ENCODE measurements at regions of chr1 and their contacts with region 1.

Region 1: DNA sequence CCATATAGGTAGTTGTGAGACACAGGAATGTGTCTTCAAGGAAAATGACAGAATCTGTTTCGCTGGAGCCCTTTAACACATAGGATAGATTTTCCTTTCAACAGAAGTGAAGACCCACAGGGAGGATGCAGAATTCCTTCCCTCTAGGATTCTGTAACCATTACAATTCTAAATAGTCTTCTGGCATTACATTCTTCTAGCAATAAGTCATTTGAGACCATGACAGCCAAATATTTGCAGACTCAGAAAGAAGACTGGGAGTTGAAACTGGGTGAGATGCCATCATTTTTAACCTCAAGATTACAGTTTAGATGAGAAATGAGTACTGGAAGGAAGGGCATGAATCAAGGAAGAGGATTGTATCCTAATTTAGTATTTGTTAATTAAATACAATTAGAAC is 61.6 kb downstream of the ZBTB18 start:
- DNase-seq: no peak
- H3K4me3 ChIP-seq: no peak overlapping the region
- H3K27ac ChIP-seq: no peak overlapping the region
- H3K4me1 ChIP-seq: no peaks in the 10 kb centered on the region
- H3K27me3 ChIP-seq: peaks cover under 1% of the 10 kb centered on the region
- CTCF ChIP-seq: no peak
- EP300 ChIP-seq: no peak
- POLR2A ChIP-seq: no peak

Region 2: DNA sequence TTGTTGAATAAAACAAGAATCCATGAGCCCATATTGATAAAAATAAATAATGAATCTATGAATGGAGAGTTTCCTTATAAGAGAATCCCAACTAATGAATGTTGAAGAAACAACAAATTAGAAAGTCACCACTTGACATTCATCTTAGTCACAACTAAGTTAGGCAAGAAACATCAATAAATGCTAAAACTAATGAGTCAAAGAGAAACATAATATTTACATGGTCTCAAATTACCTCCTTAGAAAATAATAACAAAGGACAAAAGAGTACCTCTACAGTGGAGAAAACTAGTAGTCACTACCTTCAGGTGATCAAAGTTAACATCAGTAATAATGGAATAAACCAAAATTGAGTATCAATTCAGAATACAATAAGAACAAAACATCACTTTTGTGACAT is 356.1 kb before region 1 on chr1:
- in situ Hi-C with region 1: no loop called
- intact Hi-C with region 1: loop called (anchors 5 kb)
- DNase-seq: no peak
- H3K4me3 ChIP-seq: no peak overlapping the region
- H3K27ac ChIP-seq: no peak overlapping the region
- H3K4me1 ChIP-seq: no peaks in the 10 kb centered on the region
- H3K27me3 ChIP-seq: no peaks in the 10 kb centered on the region
- CTCF ChIP-seq: no peak
- EP300 ChIP-seq: no peak
- POLR2A ChIP-seq: no peak